WTC11 (cell line): ENCODE measurements at regions of chr2 and their contacts with region 1.

Region 1: DNA sequence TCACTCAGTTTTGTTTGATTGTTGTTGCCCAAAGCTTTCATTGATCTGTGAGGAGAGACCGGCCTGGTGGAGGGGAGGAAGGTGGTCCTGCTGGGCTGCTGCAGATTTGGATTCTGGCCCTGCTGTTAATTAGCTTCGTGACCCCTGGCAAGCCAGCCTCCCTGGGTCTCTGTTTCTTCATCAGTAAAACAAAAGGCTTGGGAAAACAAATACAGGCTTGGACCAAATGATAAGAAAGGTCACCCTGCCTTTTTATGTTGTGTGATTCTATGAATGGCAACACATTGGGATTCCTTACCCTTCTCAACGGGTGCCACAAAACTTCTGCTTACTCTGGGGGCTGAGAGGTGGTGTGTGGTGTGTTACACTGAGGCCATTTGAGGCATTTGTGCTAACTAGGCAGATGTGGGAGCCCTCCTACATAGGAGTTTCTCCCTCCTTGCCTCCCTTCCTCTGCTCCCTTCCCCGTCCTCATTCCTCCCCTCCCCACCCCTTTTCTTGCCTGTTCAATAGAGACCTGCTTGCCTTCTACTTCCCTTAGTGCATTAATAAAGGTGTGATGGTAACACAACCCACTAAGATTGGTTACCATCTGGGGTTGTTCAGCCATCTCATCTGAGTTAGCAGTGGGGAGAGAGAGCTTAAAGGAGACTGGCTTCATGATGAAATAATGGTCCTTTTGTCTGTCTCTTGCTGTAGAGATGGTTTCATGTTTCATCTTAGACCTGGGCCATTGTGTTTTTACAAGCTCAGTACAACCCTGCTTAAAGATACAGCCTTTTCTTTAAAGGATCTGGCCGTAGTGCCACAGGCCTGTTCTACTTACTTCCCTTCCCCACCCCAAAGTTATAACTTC is 96.2 kb downstream of the TANC1 start:
- DNase-seq: no peak
- ATAC-seq: peak; percentile 90
- H3K4me3 Mint-ChIP-seq: peak overlapping the region; percentile 18; the same call in 1 of the 2 replicates
- H3K27ac Mint-ChIP-seq: peak overlapping the region; percentile 58
- H3K4me1 Mint-ChIP-seq: peaks cover 33% of the 10 kb centered on the region
- H3K27me3 Mint-ChIP-seq: no peaks in the 10 kb centered on the region
- CTCF ChIP-seq: no peak

Region 2: DNA sequence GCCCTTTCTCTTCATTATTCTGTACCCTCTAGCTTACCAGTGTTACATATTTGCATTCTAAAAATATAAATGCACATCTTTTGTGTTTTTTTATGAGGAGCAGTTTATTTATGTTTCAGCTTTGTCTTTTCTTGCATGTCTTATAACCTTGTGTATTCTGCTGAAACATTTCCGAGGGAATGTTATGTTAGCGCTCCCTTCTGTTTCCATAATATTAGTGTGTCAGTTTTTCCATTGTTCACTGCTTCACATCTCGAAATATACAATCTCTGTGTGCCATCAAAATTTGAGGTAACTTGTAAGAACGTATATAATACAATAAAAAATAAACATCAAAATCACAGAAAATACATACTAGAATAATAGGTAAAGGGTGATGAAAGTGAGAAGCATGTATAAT is 454.6 kb before region 1 on chr2:
- CTCF ChIA-PET with region 1: no interaction called
- POLR2A ChIA-PET with region 1: no interaction called
- DNase-seq: no peak
- ATAC-seq: no peak
- H3K4me3 Mint-ChIP-seq: no peak overlapping the region
- H3K27ac Mint-ChIP-seq: no peak overlapping the region
- H3K4me1 Mint-ChIP-seq: peaks cover 7% of the 10 kb centered on the region
- H3K27me3 Mint-ChIP-seq: no peaks in the 10 kb centered on the region
- CTCF ChIP-seq: no peak

Region 3: GRCh38 chr2:159010340-159010739 is 54.3 kb before region 1 on chr2:
- CTCF ChIA-PET with region 1: no interaction called
- POLR2A ChIA-PET with region 1: no interaction called
- DNase-seq: no peak
- ATAC-seq: no peak
- H3K4me3 Mint-ChIP-seq: no peak overlapping the region
- H3K27ac Mint-ChIP-seq: no peak overlapping the region
- H3K4me1 Mint-ChIP-seq: peaks cover 8% of the 10 kb centered on the region
- H3K27me3 Mint-ChIP-seq: peaks cover 1% of the 10 kb centered on the region
- CTCF ChIP-seq: no peak

Region 4: GRCh38 chr2:159035790-159036411 is 28.8 kb before region 1 on chr2:
- CTCF ChIA-PET with region 1: interaction called, 19 read pairs
- POLR2A ChIA-PET with region 1: no interaction called
- DNase-seq: peak; percentile 54
- ATAC-seq: peak; percentile 97
- H3K4me3 Mint-ChIP-seq: no peak overlapping the region
- H3K27ac Mint-ChIP-seq: no peak overlapping the region
- H3K4me1 Mint-ChIP-seq: peaks cover 32% of the 10 kb centered on the region
- H3K27me3 Mint-ChIP-seq: no peaks in the 10 kb centered on the region
- CTCF ChIP-seq: no peak

Region 5: GRCh38 chr2:159549234-159549633 is 484.6 kb after region 1 on chr2:
- CTCF ChIA-PET with region 1: no interaction called
- POLR2A ChIA-PET with region 1: no interaction called
- DNase-seq: no peak
- ATAC-seq: no peak
- H3K4me3 Mint-ChIP-seq: no peak overlapping the region
- H3K27ac Mint-ChIP-seq: peak overlapping the region; percentile 23; the same call in 1 of the 2 replicates
- H3K4me1 Mint-ChIP-seq: peaks cover 22% of the 10 kb centered on the region
- H3K27me3 Mint-ChIP-seq: no peaks in the 10 kb centered on the region
- CTCF ChIP-seq: no peak